CD8-positive, alpha-beta T cell (primary cell): ENCODE measurements at regions of chr5 and their contacts with region 1.

Region 1: DNA sequence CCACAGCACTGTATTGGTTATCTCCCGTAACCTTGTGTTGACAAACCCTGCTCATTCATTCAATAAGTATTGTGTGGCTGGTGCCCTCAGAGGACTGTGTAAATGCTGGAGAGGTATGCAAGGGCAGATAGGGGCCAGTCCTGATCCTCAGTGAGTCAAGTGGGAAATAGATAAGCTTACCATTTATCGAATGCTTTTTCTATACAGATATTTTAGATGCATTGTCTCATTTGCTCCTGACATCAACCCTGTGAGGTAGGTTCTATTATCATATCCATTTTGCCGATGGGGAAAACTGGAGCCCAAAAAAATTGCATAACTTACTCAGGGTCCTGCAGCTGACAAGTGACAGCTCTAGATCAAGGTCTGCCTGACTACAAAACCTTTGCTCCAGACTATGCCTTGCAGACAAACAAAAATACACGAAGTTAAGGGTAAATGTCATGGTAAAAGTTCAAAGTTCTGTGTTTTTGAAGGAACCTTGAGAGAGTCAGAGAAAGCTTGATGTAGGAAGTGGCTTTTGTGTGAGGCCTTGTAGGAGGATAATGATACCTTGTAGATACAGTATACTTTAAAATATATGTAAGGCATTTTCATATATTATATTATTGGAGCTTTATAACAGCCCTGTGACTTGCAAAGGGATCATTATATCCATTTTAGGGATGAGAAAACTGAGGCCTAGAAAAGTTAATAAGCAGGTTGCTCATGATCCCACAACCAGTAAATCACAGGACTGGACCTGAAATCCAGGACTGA is 22.7 kb downstream of the CYFIP2 start:
- DNase-seq: peak in 1 of 9 experiments; percentile 43
- ATAC-seq: peak; percentile 69
- H3K4me3 ChIP-seq: no peak overlapping the region
- H3K4me3 Mint-ChIP-seq: peak overlapping the region; percentile 47
- H3K27ac ChIP-seq: peak overlapping the region; percentile 4 to 16
- H3K27ac Mint-ChIP-seq: peak overlapping the region; percentile 91
- H3K4me1 ChIP-seq: peaks cover 72% of the 10 kb centered on the region
- H3K4me1 Mint-ChIP-seq: peaks cover 72% of the 10 kb centered on the region
- H3K27me3 ChIP-seq: no peaks in the 10 kb centered on the region
- H3K27me3 Mint-ChIP-seq: no peaks in the 10 kb centered on the region
- CTCF ChIP-seq: no peak

Region 2: GRCh38 chr5:157303667-157304327 is 15.2 kb after region 1 on chr5:
- CTCF ChIA-PET with region 1: interaction called, 9 read pairs
- POLR2A ChIA-PET with region 1: no interaction called
- intact Hi-C with region 1: loop called (anchors 2 kb)
- DNase-seq: peak; percentile 37 to 77 (median 61)
- ATAC-seq: peak; percentile 68
- H3K4me3 ChIP-seq: peak overlapping the region; percentile 6 to 23
- H3K4me3 Mint-ChIP-seq: peak overlapping the region; percentile 64
- H3K27ac ChIP-seq: peak overlapping the region; percentile 17 to 61
- H3K27ac Mint-ChIP-seq: peak overlapping the region; percentile 95
- H3K4me1 ChIP-seq: peaks cover 66% of the 10 kb centered on the region
- H3K4me1 Mint-ChIP-seq: peaks cover 64% of the 10 kb centered on the region
- H3K27me3 ChIP-seq: no peaks in the 10 kb centered on the region
- H3K27me3 Mint-ChIP-seq: no peaks in the 10 kb centered on the region
- CTCF ChIP-seq: peak; percentile 53

Region 3: GRCh38 chr5:157607371-157608161 is 319.0 kb after region 1 on chr5:
- CTCF ChIA-PET with region 1: no interaction called
- POLR2A ChIA-PET with region 1: no interaction called
- intact Hi-C with region 1: no loop called
- DNase-seq: peak in 8 of 9 experiments; percentile 24 to 70 (median 62)
- ATAC-seq: peak; percentile 59
- H3K4me3 ChIP-seq: no peak overlapping the region
- H3K4me3 Mint-ChIP-seq: no peak overlapping the region
- H3K27ac ChIP-seq: peak overlapping the region in 1 of 2 experiments; percentile 27
- H3K27ac Mint-ChIP-seq: peak overlapping the region; percentile 78
- H3K4me1 ChIP-seq: peaks cover 7% of the 10 kb centered on the region
- H3K4me1 Mint-ChIP-seq: peaks cover 34% of the 10 kb centered on the region
- H3K27me3 ChIP-seq: no peaks in the 10 kb centered on the region
- H3K27me3 Mint-ChIP-seq: no peaks in the 10 kb centered on the region
- CTCF ChIP-seq: no peak